ENCODE measurements at regions of chr1 and their contacts with region 1.

Region 1: DNA sequence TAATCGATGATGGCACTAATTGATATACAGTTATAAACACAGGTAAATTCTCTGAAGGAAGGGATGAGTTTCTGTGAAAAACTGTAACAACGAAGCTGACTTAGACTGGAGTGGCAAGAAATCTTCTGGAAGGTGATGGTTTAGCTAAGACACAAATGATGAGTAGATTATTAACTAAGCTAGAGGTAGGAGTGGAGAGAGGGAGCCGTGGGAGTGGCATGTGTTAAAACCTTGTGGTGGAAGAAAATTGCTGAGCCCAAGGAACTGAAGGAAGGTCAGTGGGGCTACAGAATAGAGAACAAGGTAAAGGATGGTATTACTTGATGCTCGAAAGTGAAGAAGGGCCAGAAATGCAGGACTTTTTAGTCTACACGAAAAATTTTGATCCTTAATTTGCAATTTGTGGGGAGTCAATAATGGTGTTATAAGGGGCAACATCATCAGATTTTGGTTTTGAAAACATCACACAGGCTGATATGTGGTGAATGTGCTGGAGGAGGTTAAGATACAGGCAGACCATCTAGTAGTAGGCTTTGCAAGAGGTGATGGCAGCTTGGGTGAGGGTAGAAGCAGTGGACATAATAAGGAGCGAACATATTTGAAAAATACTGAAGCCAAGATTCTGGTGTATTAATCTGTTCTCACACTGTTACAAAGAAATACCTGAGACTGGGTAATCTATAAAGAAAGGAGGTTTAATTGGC is 93.8 kb downstream of the S1PR1 start:
- DNase-seq: no peak
- ATAC-seq: peak; percentile 43 to 72 (median 54)
- H3K4me3 ChIP-seq: no peak overlapping the region
- H3K4me3 Mint-ChIP-seq: peak overlapping the region; percentile 83
- H3K27ac ChIP-seq: peak overlapping the region; percentile 59
- H3K27ac Mint-ChIP-seq: peak overlapping the region; percentile 88 to 92
- H3K4me1 ChIP-seq: peaks cover 23% of the 10 kb centered on the region
- H3K4me1 Mint-ChIP-seq: peaks cover 76% of the 10 kb centered on the region in 2 donors
- H3K27me3 ChIP-seq: no peaks in the 10 kb centered on the region
- H3K27me3 Mint-ChIP-seq: no peaks in the 10 kb centered on the region
- CTCF ChIP-seq: no peak

Region 2: DNA sequence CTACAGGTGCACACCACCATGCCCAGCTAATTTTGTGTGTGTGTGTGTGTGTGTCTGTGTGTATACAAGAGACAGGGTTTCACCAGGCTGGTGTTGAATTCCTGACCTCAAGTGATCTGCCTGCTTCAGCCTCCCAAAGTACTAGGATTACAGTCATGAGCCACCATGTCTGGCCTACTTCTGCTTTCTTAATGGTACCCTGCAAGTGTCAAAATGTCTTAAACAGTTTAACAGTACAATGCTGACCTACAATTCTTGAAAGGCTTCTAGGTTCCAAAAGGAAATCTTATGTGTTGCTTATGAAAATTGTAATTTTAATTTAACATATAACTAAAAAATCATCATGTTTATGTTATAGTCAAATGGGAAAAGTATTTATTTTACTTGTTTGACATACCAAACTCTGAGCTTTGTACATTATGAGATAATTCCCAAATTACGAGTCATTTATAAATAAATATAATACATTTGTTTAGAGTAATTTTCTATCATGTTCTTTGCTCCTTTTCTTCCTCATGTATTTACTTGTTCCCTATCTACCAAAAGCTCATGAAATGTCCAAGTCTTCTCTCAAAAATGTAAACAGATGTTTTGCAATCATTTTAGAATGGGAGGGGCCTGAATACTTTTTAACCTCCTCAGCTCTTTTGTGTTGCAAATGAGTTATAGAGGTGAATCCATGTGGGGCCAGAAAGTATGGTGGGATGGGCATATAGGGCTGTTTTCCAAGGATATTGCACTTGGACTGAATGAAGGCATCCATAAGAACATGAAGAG is 619.5 kb before region 1 on chr1:
- intact Hi-C with region 1: loop called (anchors 5 kb)
- DNase-seq: no peak
- ATAC-seq: no peak
- H3K4me3 ChIP-seq: no peak overlapping the region
- H3K4me3 Mint-ChIP-seq: no peak overlapping the region
- H3K27ac ChIP-seq: no peak overlapping the region
- H3K27ac Mint-ChIP-seq: peak overlapping the region in 1 of 2 donors; percentile 96
- H3K4me1 ChIP-seq: peaks cover 22% of the 10 kb centered on the region
- H3K4me1 Mint-ChIP-seq: peaks cover 46 to 49% of the 10 kb centered on the region in 2 donors
- H3K27me3 ChIP-seq: peaks cover 2% of the 10 kb centered on the region
- H3K27me3 Mint-ChIP-seq: peaks cover 3 to 35% of the 10 kb centered on the region in 2 donors
- CTCF ChIP-seq: no peak

Region 3: DNA sequence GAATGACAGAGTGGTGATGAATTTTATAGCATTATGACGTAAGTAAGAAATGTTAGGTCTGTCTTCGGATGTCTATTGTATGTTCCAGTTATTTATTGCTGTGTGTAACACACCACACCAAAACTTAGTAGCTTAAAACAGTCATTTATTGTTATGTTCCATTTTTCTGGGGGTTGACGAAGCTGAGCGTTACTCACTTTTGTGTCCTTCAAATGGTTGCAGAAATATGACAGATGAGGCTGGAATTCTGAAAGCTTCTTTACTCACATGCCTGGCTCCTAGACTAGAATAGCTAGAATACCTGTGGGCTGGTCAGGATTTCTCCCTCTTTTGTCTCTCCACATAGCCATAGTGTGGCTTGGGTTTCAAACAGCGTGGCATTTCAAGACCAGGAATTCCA is 155.9 kb before region 1 on chr1:
- intact Hi-C with region 1: no loop called
- DNase-seq: no peak
- ATAC-seq: no peak
- H3K4me3 ChIP-seq: no peak overlapping the region
- H3K4me3 Mint-ChIP-seq: no peak overlapping the region
- H3K27ac ChIP-seq: no peak overlapping the region
- H3K27ac Mint-ChIP-seq: no peak overlapping the region
- H3K4me1 ChIP-seq: peaks cover 3% of the 10 kb centered on the region
- H3K4me1 Mint-ChIP-seq: peaks cover 14 to 15% of the 10 kb centered on the region in 2 donors
- H3K27me3 ChIP-seq: no peaks in the 10 kb centered on the region
- H3K27me3 Mint-ChIP-seq: no peaks in the 10 kb centered on the region
- CTCF ChIP-seq: no peak